CD4-positive, alpha-beta memory T cell (primary cell): ENCODE measurements at regions of chr6 and their contacts with region 1.

Region 1: GRCh38 chr6:149373511-149373910 is 26.6 kb upstream of the SUMO4 start:
- DNase-seq: no peak
- H3K4me3 ChIP-seq: no peak overlapping the region
- H3K4me3 Mint-ChIP-seq: peak overlapping the region in 4 of 8 donors; percentile 6 to 22 (median 18)
- H3K27ac ChIP-seq: no peak overlapping the region
- H3K27ac Mint-ChIP-seq: peak overlapping the region in 4 of 7 donors; percentile 12 to 64 (median 58)
- H3K4me1 ChIP-seq: peaks cover 70% of the 10 kb centered on the region
- H3K4me1 Mint-ChIP-seq: peaks cover 41 to 66% (median 53%) of the 10 kb centered on the region in 4 donors
- H3K27me3 ChIP-seq: no peaks in the 10 kb centered on the region
- H3K27me3 Mint-ChIP-seq: no peaks in the 10 kb centered on the region

Region 2: GRCh38 chr6:149387779-149388512 is 14.4 kb after region 1 on chr6:
- CTCF ChIA-PET with region 1: interaction called, 4 read pairs
- POLR2A ChIA-PET with region 1: interaction called, 3 read pairs
- intact Hi-C with region 1: loop called (anchors 2 kb)
- DNase-seq: no peak
- H3K4me3 ChIP-seq: no peak overlapping the region
- H3K4me3 Mint-ChIP-seq: peak overlapping the region in 1 of 8 donors; percentile 23
- H3K27ac ChIP-seq: no peak overlapping the region
- H3K27ac Mint-ChIP-seq: peak overlapping the region in 2 of 7 donors; percentile 34 to 61
- H3K4me1 ChIP-seq: peaks cover 42% of the 10 kb centered on the region
- H3K4me1 Mint-ChIP-seq: peaks cover 36 to 78% (median 54%) of the 10 kb centered on the region in 4 donors
- H3K27me3 ChIP-seq: no peaks in the 10 kb centered on the region
- H3K27me3 Mint-ChIP-seq: no peaks in the 10 kb centered on the region